ENCODE measurements at regions of chr2 and their contacts with region 1.

Region 1: GRCh38 chr2:233353769-233354499 is at the start of gene DGKD:
- DNase-seq: peak; percentile 50 to 83 (median 74)
- H3K4me3 ChIP-seq: peak within 1 kb of the TSS; percentile 75
- H3K27ac ChIP-seq: no peak within 1 kb of the TSS
- H3K4me1 ChIP-seq: peaks cover 12% of the 10 kb centered on the region
- H3K27me3 ChIP-seq: no peaks in the 10 kb centered on the region
- CTCF ChIP-seq: no peak
- EP300 ChIP-seq: no peak
- POLR2A ChIP-seq: no peak
- total RNA-seq, gene DGKD: 9.4 to 81.8 (median 39.5) TPM

Region 2: GRCh38 chr2:233387667-233388528 is 34.0 kb after region 1 on chr2:
- intact Hi-C with region 1: loop called in 1 of 4 experiments (anchors 2 kb)
- DNase-seq: peak; percentile 95 to 97 (median 97)
- H3K4me3 ChIP-seq: peak overlapping the region; percentile 10
- H3K27ac ChIP-seq: peak overlapping the region; percentile 59 to 91
- H3K4me1 ChIP-seq: peaks cover 32% of the 10 kb centered on the region
- H3K27me3 ChIP-seq: no peaks in the 10 kb centered on the region
- CTCF ChIP-seq: peak in 1 of 3 donors; percentile 28
- EP300 ChIP-seq: no peak
- POLR2A ChIP-seq: peak; percentile 50

Region 3: GRCh38 chr2:233434666-233435330 is 80.9 kb after region 1 on chr2:
- intact Hi-C with region 1: loop called in 1 of 4 experiments (anchors 2 kb)
- DNase-seq: peak in 2 of 5 donors; percentile 10 to 15
- H3K4me3 ChIP-seq: no peak overlapping the region
- H3K27ac ChIP-seq: no peak overlapping the region
- H3K4me1 ChIP-seq: peaks cover 4% of the 10 kb centered on the region
- H3K27me3 ChIP-seq: no peaks in the 10 kb centered on the region
- CTCF ChIP-seq: no peak
- EP300 ChIP-seq: no peak
- POLR2A ChIP-seq: no peak

Measured in ovary (tissue), 10 donors.